PC-3 (cell line): ENCODE measurements at regions of chr6 and their contacts with region 1.

Region 1: GRCh38 chr6:22113026-22113766 is 183.6 kb downstream of the PRL start:
- DNase-seq: peak; percentile 98
- ATAC-seq: peak; percentile 98
- H3K4me3 ChIP-seq: no peak overlapping the region
- H3K27ac ChIP-seq: peak overlapping the region; percentile 99
- H3K4me1 ChIP-seq: peaks cover 20% of the 10 kb centered on the region
- H3K27me3 ChIP-seq: no peaks in the 10 kb centered on the region
- CTCF ChIP-seq: no peak

Region 2: DNA sequence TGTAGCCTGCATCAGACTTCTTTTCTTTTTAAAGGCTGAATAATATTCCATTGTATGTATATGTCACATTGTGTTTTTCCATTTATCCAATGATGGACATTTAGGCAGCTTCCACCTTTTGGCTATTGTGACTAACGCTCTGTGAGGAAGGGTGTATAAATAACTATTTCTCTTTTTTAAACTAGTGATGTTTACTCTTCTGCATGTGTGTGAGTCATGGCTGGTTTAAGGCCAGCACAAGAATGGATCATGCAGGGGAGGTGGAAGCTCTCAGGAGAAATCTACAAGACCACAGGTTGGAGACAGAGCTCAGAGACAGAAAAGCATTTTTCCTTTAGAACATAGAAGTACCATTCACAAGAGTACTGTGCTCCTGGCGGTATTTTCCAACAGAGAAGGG is 212.5 kb before region 1 on chr6:
- CTCF ChIA-PET with region 1: no interaction called
- POLR2A ChIA-PET with region 1: no interaction called
- intact Hi-C with region 1: loop called (anchors 10 kb)
- DNase-seq: peak; percentile 89
- ATAC-seq: peak; percentile 99
- H3K4me3 ChIP-seq: no peak overlapping the region
- H3K27ac ChIP-seq: peak overlapping the region; percentile 37
- H3K4me1 ChIP-seq: peaks cover 14% of the 10 kb centered on the region
- H3K27me3 ChIP-seq: no peaks in the 10 kb centered on the region
- CTCF ChIP-seq: no peak

Region 3: GRCh38 chr6:22248513-22249308 is 135.5 kb after region 1 on chr6:
- CTCF ChIA-PET with region 1: no interaction called
- POLR2A ChIA-PET with region 1: no interaction called
- intact Hi-C with region 1: loop called (anchors 5 kb)
- DNase-seq: peak; percentile 93
- ATAC-seq: peak; percentile 79
- H3K4me3 ChIP-seq: peak overlapping the region; percentile 30
- H3K27ac ChIP-seq: peak overlapping the region; percentile 95
- H3K4me1 ChIP-seq: peaks cover 45% of the 10 kb centered on the region
- H3K27me3 ChIP-seq: no peaks in the 10 kb centered on the region
- CTCF ChIP-seq: no peak

Region 4: GRCh38 chr6:22372922-22373321 is 259.7 kb after region 1 on chr6:
- CTCF ChIA-PET with region 1: no interaction called
- POLR2A ChIA-PET with region 1: no interaction called
- intact Hi-C with region 1: loop called (anchors 10 kb)
- DNase-seq: no peak
- ATAC-seq: no peak
- H3K4me3 ChIP-seq: no peak overlapping the region
- H3K27ac ChIP-seq: no peak overlapping the region
- H3K4me1 ChIP-seq: peaks cover 7% of the 10 kb centered on the region; the same call in 1 of the 2 replicates
- H3K27me3 ChIP-seq: no peaks in the 10 kb centered on the region
- CTCF ChIP-seq: no peak